ENCODE measurements at regions of chr9 and their contacts with region 1.

Region 1: DNA sequence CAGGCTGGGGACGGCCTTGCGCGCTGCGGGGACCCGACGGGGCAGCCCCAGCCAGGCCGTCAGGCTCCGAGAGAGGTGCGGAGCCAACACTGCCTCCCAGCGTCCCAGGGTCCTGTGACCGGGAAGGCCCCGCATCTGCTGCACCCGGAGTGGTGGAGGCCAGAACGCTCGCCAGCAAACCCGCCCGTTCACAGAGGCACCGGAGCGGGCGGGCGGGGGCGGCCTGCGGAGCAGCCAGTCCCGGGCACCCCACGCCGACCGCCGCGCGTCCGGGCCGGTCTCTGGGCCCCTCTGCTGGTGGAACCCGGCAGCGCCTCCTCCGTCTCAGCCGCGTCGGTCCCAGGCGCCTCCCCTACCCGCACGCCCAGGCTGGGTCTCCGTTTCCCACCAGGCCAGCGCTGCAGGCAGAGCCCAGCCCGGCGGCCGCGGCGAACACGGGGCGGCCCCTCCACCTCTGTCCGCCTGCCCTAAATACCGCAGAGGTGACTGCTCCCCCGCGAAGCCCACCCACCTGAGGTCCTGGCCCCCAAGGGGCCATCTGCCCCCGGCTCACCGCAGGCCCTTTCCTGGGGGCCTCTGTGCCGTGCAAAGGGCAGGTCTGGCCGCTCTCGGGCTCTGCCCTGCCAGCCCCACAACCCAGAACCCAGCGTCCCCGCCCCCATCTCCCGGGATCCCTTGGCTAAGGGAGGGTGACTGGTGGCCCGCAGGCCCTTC is 15.9 kb downstream of the EXD3 start:
- DNase-seq: peak; percentile 81 to 90
- ATAC-seq: peak; percentile 87
- H3K4me3 ChIP-seq: no peak overlapping the region
- H3K27ac ChIP-seq: no peak overlapping the region
- H3K4me1 ChIP-seq: peaks cover 0 to 4% of the 10 kb centered on the region in 2 donors
- H3K27me3 ChIP-seq: no peaks in the 10 kb centered on the region

Region 2: GRCh38 chr9:137295238-137295811 is 111.7 kb before region 1 on chr9:
- intact Hi-C with region 1: loop called (anchors 2 to 10 kb)
- DNase-seq: no peak
- ATAC-seq: peak; percentile 49
- H3K4me3 ChIP-seq: no peak overlapping the region
- H3K27ac ChIP-seq: no peak overlapping the region
- H3K4me1 ChIP-seq: no peaks in the 10 kb centered on the region
- H3K27me3 ChIP-seq: no peaks in the 10 kb centered on the region